Activated CD4-positive, alpha-beta memory T cell treated with anti-CD3 and anti-CD28 coated beads, Interleukin-2, amount 10 ng/mL, durations not matched to agents 7 days and 5 days (primary cell): ENCODE measurements at regions of chr14 and their contacts with region 1.

Region 1: DNA sequence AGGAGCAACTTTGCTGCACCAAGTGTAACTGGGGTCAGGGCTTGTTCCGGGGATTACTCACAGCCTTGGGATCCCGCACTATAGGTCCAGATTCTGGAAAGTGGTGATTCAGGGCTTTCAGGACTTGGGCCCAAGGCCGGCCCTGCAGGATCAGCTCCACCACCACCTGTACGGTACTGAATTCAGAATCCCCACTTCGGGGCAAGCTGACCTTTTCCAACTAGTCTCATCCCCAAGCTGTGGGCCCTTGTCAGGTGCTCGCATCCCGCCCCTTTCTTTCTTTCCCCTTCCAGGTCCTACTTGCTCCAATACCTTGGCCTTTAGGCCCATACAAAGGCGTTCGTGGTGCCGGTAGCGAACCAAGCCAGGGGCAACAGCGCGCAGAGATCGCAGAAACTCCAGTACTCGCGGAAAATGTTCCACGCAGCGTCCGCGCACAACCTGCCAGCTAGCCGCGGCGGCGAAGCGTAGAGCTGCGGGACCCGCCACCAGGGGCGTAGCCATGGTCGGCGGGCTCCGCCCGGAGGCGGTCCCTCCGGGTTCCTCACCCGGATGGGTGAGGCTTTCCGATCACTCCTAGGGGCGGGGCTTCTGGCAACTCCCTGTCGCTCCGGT is 487 bp downstream of the TINF2 start:
- DNase-seq: peak; percentile 94
- H3K4me3 Mint-ChIP-seq: peak overlapping the region; percentile 89
- H3K27ac Mint-ChIP-seq: peak overlapping the region; percentile 96
- H3K4me1 Mint-ChIP-seq: peaks cover 61% of the 10 kb centered on the region
- H3K27me3 Mint-ChIP-seq: no peaks in the 10 kb centered on the region

Region 2: DNA sequence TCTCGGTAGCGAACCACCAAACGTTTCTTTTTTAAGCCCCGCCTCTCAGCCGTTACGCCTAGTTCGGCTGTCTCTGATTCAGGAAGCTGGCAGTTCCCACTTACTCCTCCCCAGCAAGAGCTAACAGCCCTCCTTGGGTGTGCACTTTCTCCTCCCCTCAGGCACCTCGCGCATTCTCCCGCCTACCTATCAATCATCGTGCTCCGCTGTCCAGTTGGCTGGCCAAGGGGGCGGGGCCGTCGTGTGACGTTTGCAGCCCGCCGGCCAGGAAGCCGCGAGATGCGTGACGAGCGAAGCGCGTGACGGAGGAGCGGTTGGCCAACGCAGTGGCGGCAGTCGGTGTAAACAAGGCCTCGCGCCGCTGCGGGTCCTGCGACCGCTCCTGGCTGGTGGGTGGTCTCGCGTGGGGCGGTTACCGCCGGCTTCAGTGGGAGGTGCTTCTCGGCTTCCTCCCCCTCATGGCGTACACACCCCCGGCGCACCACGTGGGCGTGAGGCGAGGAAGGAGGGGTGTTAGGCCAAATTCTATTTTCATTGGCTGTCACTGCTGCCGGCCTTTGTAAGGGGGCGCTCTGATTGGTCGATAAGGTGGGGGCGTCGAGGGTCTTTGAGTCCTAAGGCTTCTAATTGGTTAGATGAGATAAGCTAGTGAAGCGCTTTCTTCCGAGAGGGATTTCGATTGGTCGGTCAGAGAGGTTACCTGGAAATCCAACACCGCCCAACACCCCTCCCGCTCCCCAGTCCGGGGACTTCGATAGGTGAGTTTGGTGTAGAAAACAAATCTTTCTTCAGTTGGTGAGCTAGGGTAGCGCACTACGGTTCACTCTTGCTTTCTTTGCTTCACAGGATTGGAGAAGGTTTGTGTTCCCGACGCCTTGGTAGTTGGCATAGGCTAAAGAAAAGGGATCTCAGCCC is 127.1 kb before region 1 on chr14 and contains the starts of genes DCAF11 and NRL:
- CTCF ChIA-PET with region 1: interaction called, 13 read pairs
- POLR2A ChIA-PET with region 1: interaction called, 26 read pairs
- DNase-seq: peak; percentile 98
- H3K4me3 Mint-ChIP-seq: peak within 1 kb of the TSS; percentile 98
- H3K27ac Mint-ChIP-seq: peak within 1 kb of the TSS; percentile 100
- H3K4me1 Mint-ChIP-seq: peaks cover 42% of the 10 kb centered on the region
- H3K27me3 Mint-ChIP-seq: no peaks in the 10 kb centered on the region
- total RNA-seq, gene DCAF11: 94.1 to 98.2 TPM
- total RNA-seq, gene NRL: 2.1 to 2.4 TPM

Region 3: GRCh38 chr14:24188251-24189058 is 53.5 kb before region 1 on chr14 and contains the start of gene IPO4:
- CTCF ChIA-PET with region 1: no interaction called
- POLR2A ChIA-PET with region 1: interaction called, 18 read pairs
- DNase-seq: peak; percentile 96
- H3K4me3 Mint-ChIP-seq: peak within 1 kb of the TSS; percentile 81
- H3K27ac Mint-ChIP-seq: peak within 1 kb of the TSS; percentile 79
- H3K4me1 Mint-ChIP-seq: peaks cover 59% of the 10 kb centered on the region
- H3K27me3 Mint-ChIP-seq: no peaks in the 10 kb centered on the region
- total RNA-seq, gene IPO4: 24.0 to 26.2 TPM

Region 4: DNA sequence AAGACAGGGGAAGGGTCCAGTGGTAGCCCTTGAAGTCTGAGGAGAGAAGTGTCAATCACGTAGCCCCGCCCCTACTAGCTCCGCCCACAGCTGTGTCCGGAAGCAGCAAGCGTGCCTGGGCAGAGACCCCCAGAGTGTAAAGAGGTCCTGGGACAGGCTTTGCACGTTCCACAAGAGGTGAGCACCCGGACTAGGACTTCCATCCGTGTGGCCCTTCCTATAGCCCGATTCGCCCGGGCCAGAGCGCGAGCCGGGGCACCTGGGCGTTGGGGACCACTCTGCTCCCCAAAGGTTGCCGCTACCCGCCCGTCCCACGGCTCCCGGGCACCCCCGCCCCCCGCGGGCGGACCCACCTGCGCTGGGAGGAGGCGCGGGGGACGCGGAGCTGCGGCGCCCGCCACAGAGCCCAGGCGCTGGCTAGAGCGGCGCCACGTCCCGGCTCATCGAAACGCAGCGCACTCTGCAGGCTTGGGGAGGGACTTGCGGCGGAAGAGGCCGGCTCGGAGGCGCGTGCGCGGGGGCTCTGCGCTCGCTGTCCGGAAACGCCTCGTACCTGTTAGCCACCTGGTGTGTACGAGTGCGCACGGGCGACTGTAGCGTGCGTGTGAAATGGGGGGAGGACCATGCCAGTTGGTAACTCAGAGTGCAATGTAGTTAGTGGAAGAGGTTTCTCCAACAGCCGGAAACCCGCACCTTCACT is 29.3 kb after region 1 on chr14 and contains the start of gene RABGGTA:
- CTCF ChIA-PET with region 1: interaction called, 90 read pairs
- POLR2A ChIA-PET with region 1: interaction called, 80 read pairs
- DNase-seq: peak; percentile 90
- H3K4me3 Mint-ChIP-seq: peak within 1 kb of the TSS; percentile 86
- H3K27ac Mint-ChIP-seq: peak within 1 kb of the TSS; percentile 92
- H3K4me1 Mint-ChIP-seq: peaks cover 43% of the 10 kb centered on the region
- H3K27me3 Mint-ChIP-seq: no peaks in the 10 kb centered on the region
- total RNA-seq, gene RABGGTA: 40.2 to 41.0 TPM

Region 5: DNA sequence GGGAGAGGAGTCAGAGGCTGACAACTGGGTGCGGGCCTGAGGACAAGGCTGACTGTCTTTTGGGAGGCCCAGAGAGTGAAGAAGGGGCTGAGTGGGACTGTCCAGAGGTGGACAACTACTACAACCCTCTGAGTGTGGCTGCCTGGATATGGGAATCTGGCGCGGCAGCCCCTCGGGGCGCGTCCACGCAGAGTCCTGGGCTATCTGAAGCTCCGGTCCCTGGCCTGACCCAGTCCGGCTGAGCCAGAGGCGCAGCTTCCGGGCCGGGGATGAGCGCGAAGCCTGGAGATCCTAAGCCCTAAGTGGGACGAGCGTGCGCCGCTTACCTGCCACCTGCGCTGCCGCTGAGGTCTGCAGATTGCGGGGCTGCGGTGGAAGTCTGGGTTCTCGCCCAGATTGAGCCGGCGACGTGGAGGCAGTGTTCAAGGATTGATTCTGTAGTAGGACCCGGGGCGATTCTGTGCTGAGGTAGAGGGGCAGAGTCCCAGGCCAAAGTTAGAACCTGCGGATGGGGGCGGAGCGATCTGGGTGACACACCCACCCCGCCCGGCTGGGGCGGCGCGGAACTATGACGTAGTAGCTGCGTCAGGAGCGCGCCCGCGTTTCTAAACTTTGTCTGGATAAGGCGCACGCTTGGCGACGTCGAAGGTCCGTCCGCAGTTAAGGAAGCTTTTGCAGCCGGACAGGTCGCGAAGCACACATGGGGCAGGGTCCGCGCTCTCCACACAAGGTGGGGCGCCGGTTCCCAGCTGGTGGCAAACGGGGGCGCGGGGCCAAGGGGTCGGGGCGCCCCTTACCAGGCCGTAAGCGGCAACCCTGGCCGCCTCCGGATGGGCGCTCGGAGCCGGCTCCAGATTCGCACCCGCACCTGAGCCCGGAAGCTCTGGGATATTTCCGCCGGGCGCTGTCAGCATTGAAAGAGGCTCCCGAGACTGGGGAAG is 57.6 kb after region 1 on chr14 and contains the starts of genes DHRS1 and NOP9:
- CTCF ChIA-PET with region 1: interaction called, 213 read pairs
- POLR2A ChIA-PET with region 1: interaction called, 96 read pairs
- DNase-seq: peak; percentile 94
- H3K4me3 Mint-ChIP-seq: peak within 1 kb of the TSS; percentile 84
- H3K27ac Mint-ChIP-seq: peak within 1 kb of the TSS; percentile 84
- H3K4me1 Mint-ChIP-seq: peaks cover 60% of the 10 kb centered on the region
- H3K27me3 Mint-ChIP-seq: no peaks in the 10 kb centered on the region
- total RNA-seq, gene DHRS1: 31.6 to 33.4 TPM
- total RNA-seq, gene NOP9: 25.8 to 27.7 TPM

Region 6: GRCh38 chr14:24425704-24426103 is 183.8 kb after region 1 on chr14:
- CTCF ChIA-PET with region 1: interaction called, 56 read pairs
- POLR2A ChIA-PET with region 1: interaction called, 57 read pairs
- DNase-seq: no peak
- H3K4me3 Mint-ChIP-seq: peak overlapping the region; percentile 0
- H3K27ac Mint-ChIP-seq: peak overlapping the region; percentile 88
- H3K4me1 Mint-ChIP-seq: peaks cover 47% of the 10 kb centered on the region
- H3K27me3 Mint-ChIP-seq: no peaks in the 10 kb centered on the region